ENCODE measurements at regions of chr5 and their contacts with region 1.

Region 1: GRCh38 chr5:118565335-118565971 is 422.9 kb downstream of the DTWD2 start:
- DNase-seq: no peak
- ATAC-seq: no peak
- H3K4me3 ChIP-seq: no peak overlapping the region
- H3K27ac ChIP-seq: no peak overlapping the region
- H3K4me1 ChIP-seq: no peaks in the 10 kb centered on the region
- H3K27me3 ChIP-seq: no peaks in the 10 kb centered on the region; a peak in 1 of 4 replicates
- CTCF ChIP-seq: no peak
- EP300 ChIP-seq: no peak
- POLR2A ChIP-seq: no peak
- RAD21 ChIP-seq: no peak

Region 2: GRCh38 chr5:118279540-118280294 is 285.7 kb before region 1 on chr5:
- CTCF ChIA-PET with region 1: no interaction called
- POLR2A ChIA-PET with region 1: no interaction called
- RAD21 ChIA-PET with region 1: no interaction called
- SMC1A ChIA-PET with region 1: no interaction called
- in situ Hi-C with region 1: no loop called
- intact Hi-C with region 1: no loop called
- DNase-seq: no peak
- ATAC-seq: no peak
- H3K4me3 ChIP-seq: no peak overlapping the region
- H3K27ac ChIP-seq: no peak overlapping the region
- H3K4me1 ChIP-seq: no peaks in the 10 kb centered on the region
- H3K27me3 ChIP-seq: no peaks in the 10 kb centered on the region
- CTCF ChIP-seq: no peak
- EP300 ChIP-seq: no peak
- POLR2A ChIP-seq: no peak
- RAD21 ChIP-seq: no peak

Region 3: GRCh38 chr5:118447319-118447718 is 118.1 kb before region 1 on chr5:
- CTCF ChIA-PET with region 1: no interaction called
- POLR2A ChIA-PET with region 1: no interaction called
- RAD21 ChIA-PET with region 1: no interaction called
- SMC1A ChIA-PET with region 1: no interaction called
- in situ Hi-C with region 1: no loop called
- intact Hi-C with region 1: no loop called
- DNase-seq: no peak
- ATAC-seq: no peak
- H3K4me3 ChIP-seq: no peak overlapping the region
- H3K27ac ChIP-seq: no peak overlapping the region
- H3K4me1 ChIP-seq: no peaks in the 10 kb centered on the region
- H3K27me3 ChIP-seq: no peaks in the 10 kb centered on the region
- CTCF ChIP-seq: no peak
- EP300 ChIP-seq: no peak
- POLR2A ChIP-seq: no peak
- RAD21 ChIP-seq: no peak

Region 4: GRCh38 chr5:118519466-118519865 is 46.0 kb before region 1 on chr5:
- CTCF ChIA-PET with region 1: no interaction called
- POLR2A ChIA-PET with region 1: no interaction called
- RAD21 ChIA-PET with region 1: no interaction called
- SMC1A ChIA-PET with region 1: no interaction called
- in situ Hi-C with region 1: loop called (anchors 5 kb)
- intact Hi-C with region 1: no loop called
- DNase-seq: no peak
- ATAC-seq: no peak
- H3K4me3 ChIP-seq: no peak overlapping the region
- H3K27ac ChIP-seq: no peak overlapping the region
- H3K4me1 ChIP-seq: no peaks in the 10 kb centered on the region
- H3K27me3 ChIP-seq: no peaks in the 10 kb centered on the region
- CTCF ChIP-seq: no peak
- EP300 ChIP-seq: no peak
- POLR2A ChIP-seq: no peak
- RAD21 ChIP-seq: no peak